ENCODE measurements at regions of chr19 and their contacts with region 1.

Region 1: DNA sequence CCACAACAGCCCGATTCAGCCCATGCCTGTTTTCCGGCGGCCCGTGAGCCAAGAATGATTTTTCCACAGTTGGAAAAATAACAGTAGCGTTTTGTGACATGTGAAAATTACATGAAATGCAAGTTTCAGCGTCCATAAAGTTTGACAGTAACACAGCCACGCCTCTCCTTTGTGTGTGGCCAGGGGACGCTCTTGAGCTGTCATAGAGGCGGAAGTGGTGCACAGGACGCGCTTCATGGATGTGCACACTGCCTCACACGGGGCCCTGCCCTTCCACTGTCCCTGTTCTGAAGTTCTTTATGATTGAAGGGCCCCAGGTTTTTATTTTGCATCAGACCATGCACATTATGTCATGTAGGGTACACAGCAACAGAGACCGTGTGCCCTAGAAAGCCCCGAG is 12.4 kb upstream of the ELAVL1 start:
- DNase-seq: peak; percentile 21
- H3K4me3 Mint-ChIP-seq: no peak overlapping the region
- H3K27ac Mint-ChIP-seq: no peak overlapping the region
- H3K4me1 Mint-ChIP-seq: peaks cover 5% of the 10 kb centered on the region
- H3K27me3 Mint-ChIP-seq: no peaks in the 10 kb centered on the region

Region 2: DNA sequence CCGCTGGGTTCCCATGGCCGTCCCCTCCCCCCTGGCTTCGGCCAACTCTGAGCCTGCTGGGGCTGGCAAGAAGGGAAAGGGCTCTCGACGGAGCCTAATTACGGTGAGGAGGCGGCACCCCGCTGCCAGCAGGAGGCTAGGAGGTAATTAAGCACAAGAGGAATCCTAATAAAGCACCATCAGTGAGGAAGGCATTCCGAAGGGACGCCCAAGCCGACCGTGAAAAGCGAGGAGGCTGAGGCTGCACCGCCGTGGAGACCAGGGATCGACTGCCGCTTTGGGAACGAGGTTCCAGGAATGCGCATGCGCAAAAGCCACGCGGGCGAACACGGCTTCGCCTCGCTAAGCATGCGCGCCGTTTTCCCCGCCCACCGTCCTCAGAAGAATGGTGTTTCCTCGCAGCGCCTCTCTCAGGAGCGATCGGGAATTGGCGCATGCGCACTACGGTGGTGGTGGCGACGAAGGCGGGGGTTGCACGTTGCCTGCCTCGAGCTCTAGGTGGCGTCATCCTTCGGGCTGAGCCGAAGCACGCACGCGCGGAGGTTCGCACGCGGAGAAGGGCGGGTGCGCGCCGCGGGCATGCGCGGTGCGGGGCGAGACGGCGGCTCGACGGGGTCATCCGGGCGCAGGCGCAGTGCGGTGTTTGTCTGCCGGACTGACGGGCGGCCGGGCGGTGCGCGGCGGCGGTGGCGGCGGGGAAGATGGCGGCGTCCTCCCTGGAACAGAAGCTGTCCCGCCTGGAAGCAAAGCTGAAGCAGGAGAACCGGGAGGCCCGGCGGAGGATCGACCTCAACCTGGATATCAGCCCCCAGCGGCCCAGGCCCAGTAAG is 114.3 kb before region 1 on chr19 and contains the start of gene MAP2K7:
- intact Hi-C with region 1: no loop called
- DNase-seq: peak; percentile 100
- H3K4me3 Mint-ChIP-seq: peak within 1 kb of the TSS; percentile 90
- H3K27ac Mint-ChIP-seq: peak within 1 kb of the TSS; percentile 94
- H3K4me1 Mint-ChIP-seq: peaks cover 29% of the 10 kb centered on the region
- H3K27me3 Mint-ChIP-seq: peaks cover 2% of the 10 kb centered on the region
- total RNA-seq, gene MAP2K7: 47.6 and 51.9 TPM in 2 replicates

Region 3: DNA sequence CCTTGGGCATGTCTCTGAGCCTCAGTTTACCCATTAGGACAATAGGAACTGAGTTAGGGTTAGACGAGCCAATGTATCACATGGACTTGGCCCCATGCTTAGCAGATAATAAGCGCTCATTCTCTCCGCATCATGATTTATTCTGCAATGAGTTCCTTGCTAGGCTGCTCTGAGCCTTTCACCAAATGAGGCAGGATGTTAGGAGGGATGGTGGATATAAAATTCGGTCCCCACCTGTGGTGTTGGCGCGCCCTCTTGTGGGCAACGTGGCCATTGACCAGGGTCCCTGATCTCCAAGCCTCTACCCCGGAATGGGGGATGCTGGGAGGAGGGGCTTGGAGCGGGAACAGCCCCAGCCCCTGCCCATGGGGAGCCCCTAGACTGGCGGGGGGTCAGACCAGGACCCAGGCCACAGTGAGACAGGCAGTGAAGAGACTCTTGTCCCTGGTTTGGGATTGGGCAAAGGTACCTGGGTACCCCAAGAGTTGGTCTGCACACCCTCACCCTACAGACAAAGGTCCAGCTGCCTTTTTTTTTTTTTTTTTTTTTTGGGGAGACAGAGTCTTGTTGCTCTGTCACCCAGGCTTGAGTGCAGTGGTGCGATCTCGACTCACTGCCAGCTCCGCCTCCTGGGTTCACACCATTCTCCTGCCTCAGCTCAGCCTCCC is 235.2 kb after region 1 on chr19:
- intact Hi-C with region 1: loop called (anchors 1 kb)
- DNase-seq: peak; percentile 71
- H3K4me3 Mint-ChIP-seq: no peak overlapping the region
- H3K27ac Mint-ChIP-seq: no peak overlapping the region
- H3K4me1 Mint-ChIP-seq: no peaks in the 10 kb centered on the region
- H3K27me3 Mint-ChIP-seq: no peaks in the 10 kb centered on the region

Region 4: DNA sequence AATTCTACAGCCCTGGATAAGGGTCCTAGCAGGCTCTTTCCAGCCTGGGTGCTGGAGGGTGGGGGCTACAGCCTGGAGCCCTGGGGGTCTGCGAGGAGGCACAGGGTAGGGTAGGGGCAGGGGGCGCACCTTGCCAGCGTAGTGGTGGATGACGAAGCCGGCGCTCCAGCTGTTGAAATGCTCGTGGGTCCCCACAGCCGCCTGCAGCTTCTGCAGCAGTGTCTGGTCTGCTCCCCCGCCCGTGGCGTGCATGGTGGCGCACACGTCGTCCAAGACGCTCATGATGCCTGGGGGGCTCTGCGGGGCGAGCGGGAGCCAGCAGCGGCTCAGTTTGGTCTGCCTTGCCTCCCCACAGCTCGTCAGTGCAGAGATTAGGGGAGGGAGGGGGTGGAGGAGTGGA is 526.4 kb after region 1 on chr19:
- intact Hi-C with region 1: no loop called
- DNase-seq: no peak
- H3K4me3 Mint-ChIP-seq: no peak overlapping the region
- H3K27ac Mint-ChIP-seq: no peak overlapping the region
- H3K4me1 Mint-ChIP-seq: no peaks in the 10 kb centered on the region
- H3K27me3 Mint-ChIP-seq: no peaks in the 10 kb centered on the region

Region 5: GRCh38 chr19:9751446-9751845 is 1733.6 kb after region 1 on chr19:
- intact Hi-C with region 1: no loop called
- DNase-seq: no peak
- H3K4me3 Mint-ChIP-seq: no peak overlapping the region
- H3K27ac Mint-ChIP-seq: no peak overlapping the region
- H3K4me1 Mint-ChIP-seq: no peaks in the 10 kb centered on the region
- H3K27me3 Mint-ChIP-seq: no peaks in the 10 kb centered on the region

Measured in activated T-helper 1 cell treated with anti-CD3 and anti-CD28 coated beads, Interleukin-12 subunit alpha, Interleukin-12 subunit beta, Interleukin-2, Interleukin-4 antibody, amounts not matched to agents 30 ng/mL and 10 ng/mL and 1 ng/mL, durations not matched to agents 14 hours and 24 hours and 36 hours (primary cell).